Posterior vena cava (tissue), 2 donors: ENCODE measurements at regions of chr3 and their contacts with region 1.

Region 1: DNA sequence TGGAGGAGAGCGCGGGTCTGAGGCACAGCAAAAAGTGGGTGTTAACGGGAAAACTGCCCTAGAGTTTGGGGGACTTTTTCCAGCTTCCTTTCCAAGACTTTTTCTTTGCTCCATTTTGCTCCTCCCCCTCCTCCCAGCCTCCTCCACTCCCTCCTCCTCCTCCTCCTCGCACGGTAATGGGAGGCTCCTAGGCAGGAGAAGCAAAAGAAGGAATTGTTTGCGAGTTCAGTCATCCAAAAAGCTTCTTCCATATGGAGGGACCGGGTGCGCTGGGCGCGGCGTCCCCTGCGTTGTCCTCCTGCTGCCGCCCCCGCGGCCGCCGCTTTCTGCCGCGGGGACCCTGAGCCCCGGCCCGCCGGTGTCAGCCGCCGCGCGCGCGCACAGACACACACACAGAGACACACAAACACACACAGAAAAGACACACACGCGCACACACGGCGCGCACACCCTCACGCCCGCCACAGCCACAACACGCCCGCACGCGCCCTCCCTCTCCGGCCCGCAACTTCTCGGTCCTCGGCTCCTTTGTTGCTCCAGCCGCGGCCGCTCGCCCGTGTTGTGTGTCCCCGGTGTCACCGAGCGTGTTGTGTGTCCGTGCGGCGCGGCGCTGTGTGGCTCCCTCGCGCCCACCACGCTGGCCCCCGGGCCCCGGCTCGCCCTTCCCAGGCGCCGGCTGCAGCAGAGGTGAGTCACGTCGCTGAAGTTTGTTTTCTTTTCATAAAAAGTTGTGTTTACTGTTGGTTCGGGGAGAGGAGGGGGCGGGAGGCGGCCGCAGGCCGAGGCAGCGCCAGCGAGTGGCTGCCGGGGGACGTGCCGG is at the start of gene BOC:
- DNase-seq: peak; percentile 81
- total RNA-seq, gene BOC: 51.6 to 86.8 TPM

Region 2: GRCh38 chr3:113051302-113051711 is 160.2 kb before region 1 on chr3:
- intact Hi-C with region 1: loop called in 1 of 2 experiments (anchors 10 kb)
- DNase-seq: peak; percentile 91

Region 3: DNA sequence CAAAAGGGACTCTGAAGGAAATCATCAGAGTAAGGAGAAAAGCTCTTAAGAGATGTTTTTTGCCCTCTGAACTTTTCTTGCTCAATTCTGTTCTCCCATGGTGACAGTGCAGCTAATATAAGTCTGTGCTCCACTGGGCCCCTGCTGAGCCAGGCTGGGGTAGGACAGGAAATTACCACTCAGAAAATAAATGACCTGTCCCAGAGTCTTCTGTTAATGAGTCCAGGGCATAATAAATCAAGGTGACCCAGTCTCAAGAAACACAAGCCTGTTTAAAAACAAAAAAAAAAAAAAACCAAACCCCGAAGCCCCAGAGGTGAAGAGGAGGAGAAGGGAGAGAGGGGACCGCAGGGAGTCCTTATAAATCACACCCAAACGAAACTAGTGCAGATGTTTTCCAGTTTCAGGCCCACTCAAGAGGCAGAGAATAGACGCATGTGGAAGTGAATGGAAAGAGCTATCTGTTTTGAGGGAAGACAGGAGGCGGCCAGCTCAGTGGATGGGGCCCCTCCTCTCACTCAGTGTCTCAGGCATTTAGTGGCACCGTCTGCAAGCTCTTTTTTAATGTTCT is 60.0 kb before region 1 on chr3:
- intact Hi-C with region 1: loop called in 1 of 2 experiments (anchors 10 kb)
- DNase-seq: peak; percentile 83

Region 4: DNA sequence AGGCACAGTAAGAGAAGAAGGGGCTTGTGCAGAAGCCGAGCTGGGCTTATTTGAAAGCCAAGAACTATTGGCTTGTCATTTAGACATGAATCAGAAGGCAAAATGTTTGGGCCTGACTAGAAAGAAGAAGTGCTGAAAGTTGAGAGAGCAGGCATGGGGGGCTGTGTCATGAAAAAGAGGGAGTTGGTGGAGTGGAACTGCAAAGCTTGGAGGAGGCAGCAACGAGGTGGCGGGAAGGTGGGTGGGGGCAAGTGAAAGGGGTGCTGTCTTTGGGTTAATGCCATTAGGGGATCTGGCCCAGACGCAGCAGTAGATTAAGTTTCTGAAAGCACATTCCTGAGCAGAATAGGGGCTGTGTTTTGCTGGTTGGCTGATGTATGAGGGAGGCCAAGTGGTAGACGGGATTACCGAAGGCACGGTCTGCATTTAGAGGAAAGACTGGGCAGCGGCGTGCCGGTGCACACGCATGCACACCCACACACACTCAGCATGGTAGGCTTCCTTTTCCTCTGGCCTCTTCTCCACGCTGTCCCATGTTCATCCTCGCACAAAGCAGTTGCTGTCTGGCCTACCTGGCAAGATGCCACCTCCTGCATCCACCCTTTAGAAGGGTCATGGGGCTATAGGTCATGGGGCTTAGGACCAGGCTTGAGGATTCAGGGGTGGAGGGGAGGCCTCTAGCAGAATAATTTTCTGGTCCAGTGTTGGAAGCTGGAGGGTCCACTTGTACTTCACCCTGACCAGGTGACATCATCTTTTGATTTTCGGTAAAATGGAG is 42.8 kb after region 1 on chr3:
- intact Hi-C with region 1: loop called in 1 of 2 experiments (anchors 5 kb)
- DNase-seq: no peak

Region 5: DNA sequence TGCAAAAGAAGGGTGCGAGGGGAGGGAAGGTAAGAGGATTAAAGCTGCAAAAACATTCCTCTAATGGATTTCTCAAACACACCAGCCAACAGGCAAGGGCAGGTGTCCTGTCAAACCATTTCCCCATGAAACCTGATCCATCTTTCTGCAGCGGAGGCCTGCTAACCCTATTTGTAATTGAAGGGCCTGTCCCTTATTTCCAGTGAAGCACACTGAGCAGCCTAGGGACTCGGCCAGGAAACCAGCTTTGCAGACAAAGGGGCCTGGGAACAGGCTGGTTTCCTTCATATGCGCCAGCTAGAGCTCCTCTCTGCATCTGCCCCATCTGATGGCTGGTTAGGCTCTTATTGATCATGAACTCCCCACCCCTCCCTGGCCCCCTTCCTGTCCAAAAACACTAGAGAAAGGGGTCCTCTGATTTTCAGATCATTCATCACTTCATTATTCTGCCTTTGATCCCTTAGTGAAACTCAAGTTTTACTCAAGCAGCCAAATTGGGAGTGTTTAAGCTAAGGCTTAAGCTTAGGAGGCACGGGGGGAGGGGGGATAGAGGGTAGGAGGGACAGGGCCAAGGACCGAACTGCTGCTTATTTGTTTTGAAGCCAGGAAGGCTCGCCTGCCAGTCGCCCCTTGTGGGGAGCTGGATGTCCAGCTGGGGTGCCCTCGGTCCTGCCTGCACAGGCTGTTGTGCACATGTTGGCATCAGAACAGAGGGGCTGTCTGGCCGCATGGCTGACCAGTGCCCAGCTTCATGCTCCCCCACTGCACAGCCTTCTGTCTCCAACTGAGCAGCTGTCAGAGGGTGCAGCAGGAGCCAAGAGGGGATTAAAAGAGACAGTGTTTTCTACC is 53.0 kb after region 1 on chr3:
- intact Hi-C with region 1: no loop called
- DNase-seq: peak; percentile 67